Activated CD4-positive, alpha-beta memory T cell treated with anti-CD3 and anti-CD28 coated beads for 36 hours (primary cell): ENCODE measurements at regions of chrX and their contacts with region 1.

Region 1: GRCh38 chrX:132092439-132093065 is 35.3 kb downstream of the FRMD7 start:
- DNase-seq: peak; percentile 65
- H3K4me3 Mint-ChIP-seq: no peak overlapping the region
- H3K27ac Mint-ChIP-seq: no peak overlapping the region
- H3K4me1 Mint-ChIP-seq: peaks cover 3% of the 10 kb centered on the region
- H3K27me3 Mint-ChIP-seq: peaks cover 2% of the 10 kb centered on the region

Region 2: DNA sequence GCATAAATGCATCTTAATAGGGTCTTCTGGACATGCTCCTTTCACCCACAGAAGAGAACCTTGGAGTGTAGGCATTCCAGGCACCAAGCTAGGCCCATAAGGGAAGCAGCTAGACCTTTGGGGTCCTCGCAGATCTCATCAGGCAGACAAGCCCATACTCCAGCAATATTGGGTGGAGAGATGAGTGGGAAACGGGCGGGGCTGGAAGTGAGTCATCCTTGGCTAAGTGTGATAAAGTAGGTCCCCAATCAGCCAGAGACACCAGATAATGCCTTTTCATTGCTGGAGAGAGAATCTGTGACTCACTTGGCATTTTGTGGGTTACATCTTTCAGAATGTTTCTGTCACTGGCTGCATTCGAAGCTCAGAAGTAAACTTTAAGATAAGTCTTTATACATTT is 529.6 kb after region 1 on chrX:
- CTCF ChIA-PET with region 1: interaction called, 4 read pairs
- POLR2A ChIA-PET with region 1: no interaction called
- intact Hi-C with region 1: loop called (anchors 5 kb)
- DNase-seq: peak; percentile 78
- H3K4me3 Mint-ChIP-seq: no peak overlapping the region
- H3K27ac Mint-ChIP-seq: no peak overlapping the region
- H3K4me1 Mint-ChIP-seq: peaks cover 3% of the 10 kb centered on the region
- H3K27me3 Mint-ChIP-seq: no peaks in the 10 kb centered on the region